BJ (cell line): ENCODE measurements at regions of chr3 and their contacts with region 1.

Region 1: DNA sequence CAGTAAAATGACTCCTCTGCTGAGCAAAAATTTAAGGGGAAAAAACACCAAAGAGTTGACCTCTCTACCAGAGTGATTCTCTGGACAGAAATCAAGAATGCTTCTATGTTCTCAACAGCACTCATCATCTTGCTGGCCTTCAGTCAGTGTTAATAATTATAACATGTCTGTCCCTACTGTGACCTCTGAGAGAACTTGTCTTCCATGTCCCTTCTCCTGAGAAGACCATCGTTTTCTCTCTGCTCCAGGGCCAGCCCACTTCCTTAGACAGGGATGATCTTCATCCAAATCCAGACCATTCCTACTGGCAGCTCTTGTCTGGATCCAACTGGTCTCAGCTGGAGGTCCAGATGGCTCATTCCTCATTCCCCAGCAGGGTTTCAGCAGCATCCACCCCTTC is 139.0 kb upstream of the NECTIN3 start:
- DNase-seq: peak; percentile 82
- H3K4me3 ChIP-seq: no peak overlapping the region
- H3K27me3 ChIP-seq: no peaks in the 10 kb centered on the region
- CTCF ChIP-seq: no peak

Region 2: DNA sequence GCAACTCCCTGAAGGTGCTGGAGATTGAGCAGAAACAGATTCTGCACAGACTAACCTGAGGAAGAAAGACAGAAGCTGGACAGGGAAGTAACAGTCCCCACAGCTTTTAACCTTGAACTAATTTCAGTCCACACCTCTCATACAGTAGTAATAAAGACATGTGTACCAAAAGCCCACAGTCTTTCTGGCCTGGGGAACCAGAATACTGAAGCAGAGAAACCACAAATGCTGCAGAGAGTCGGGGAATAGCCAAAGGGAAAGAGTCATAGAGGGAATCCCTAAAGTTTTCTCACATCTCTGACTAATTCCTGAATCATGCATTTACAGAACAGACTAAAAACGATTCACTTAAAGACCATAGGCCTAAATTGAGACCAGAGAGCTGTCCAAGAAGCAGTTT is 364.3 kb before region 1 on chr3:
- CTCF ChIA-PET with region 1: no interaction called
- POLR2A ChIA-PET with region 1: no interaction called
- DNase-seq: peak; percentile 72
- H3K4me3 ChIP-seq: no peak overlapping the region
- H3K27me3 ChIP-seq: no peaks in the 10 kb centered on the region
- CTCF ChIP-seq: no peak

Region 3: GRCh38 chr3:110984858-110985257 is 52.3 kb after region 1 on chr3:
- CTCF ChIA-PET with region 1: no interaction called
- POLR2A ChIA-PET with region 1: interaction called, 12 read pairs
- DNase-seq: no peak
- H3K4me3 ChIP-seq: no peak overlapping the region
- H3K27me3 ChIP-seq: no peaks in the 10 kb centered on the region
- CTCF ChIP-seq: no peak